Psoas muscle (tissue), 8 donors: ENCODE measurements at regions of chr18 and their contacts with region 1.

Region 1: DNA sequence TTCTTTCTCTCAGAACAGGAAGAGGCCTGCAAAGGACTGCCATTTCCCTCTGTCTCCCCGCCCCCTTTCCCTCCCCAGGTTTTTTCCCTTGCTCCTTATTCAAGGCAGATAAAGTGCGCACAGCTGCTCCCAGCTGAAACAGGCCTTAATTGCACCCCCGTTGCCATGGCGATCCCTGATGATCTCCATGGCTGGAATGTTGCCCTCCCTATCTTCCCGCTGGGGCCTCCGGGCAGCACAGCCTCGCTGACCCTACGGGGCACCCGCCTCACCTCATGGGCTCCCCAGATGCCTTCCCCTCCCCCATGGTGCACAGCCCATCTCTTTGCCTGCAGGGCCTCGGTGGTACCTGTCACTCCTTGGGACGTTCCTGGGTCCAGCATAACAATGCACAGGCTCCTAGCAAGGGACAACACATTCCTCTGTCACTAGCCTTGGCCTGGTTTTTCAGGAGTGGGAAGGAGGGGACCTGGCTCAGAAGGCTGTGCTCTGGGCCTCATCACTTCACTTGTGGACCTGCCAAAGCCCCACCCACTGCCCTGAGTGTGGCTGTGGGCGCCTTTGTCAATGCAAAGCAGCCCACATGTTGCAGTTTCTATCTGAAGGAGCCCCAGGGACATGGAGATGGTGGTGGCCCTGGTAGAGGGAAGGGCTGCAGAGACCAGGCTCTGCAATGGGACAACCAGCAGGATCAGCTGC is 115.0 kb downstream of the CELF4 start:
- DNase-seq: no peak
- ATAC-seq: no peak
- H3K4me3 ChIP-seq: no peak overlapping the region
- H3K27ac ChIP-seq: no peak overlapping the region
- H3K4me1 ChIP-seq: no peaks in the 10 kb centered on the region
- H3K27me3 ChIP-seq: peaks cover 0 to 7% (median 6%) of the 10 kb centered on the region in 3 donors
- CTCF ChIP-seq: no peak

Region 2: DNA sequence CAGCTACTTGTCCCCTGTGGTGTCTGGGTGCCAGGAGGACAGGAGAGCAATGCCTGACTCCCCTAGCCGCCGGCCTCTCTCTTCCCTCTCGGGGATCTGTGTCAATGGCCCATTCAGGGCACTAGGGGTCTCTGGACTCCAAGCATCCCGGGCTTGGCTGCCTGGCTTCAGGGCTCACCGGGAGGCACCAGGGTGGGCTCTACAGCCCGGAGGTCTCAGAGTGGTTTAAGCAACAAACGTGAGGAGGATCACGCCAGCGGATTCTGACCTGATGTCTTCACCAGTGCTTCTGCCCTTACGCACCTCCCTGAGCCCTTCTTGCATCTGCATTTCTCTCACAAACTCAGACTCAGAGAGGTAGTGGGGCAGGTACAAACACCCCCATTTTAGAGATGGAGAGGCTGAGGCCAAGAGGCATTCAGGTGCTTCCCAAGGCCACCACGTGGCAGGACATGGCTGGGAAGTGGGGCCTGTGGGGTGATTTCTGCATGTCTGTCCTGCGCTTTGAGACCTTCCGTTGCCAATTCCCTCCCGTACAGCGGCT is 128.0 kb before region 1 on chr18:
- intact Hi-C with region 1: no loop called
- DNase-seq: peak in 1 of 2 donors; percentile 26
- ATAC-seq: peak in 3 of 4 donors; percentile 51 to 55 (median 52)
- H3K4me3 ChIP-seq: no peak overlapping the region
- H3K27ac ChIP-seq: no peak overlapping the region
- H3K4me1 ChIP-seq: no peaks in the 10 kb centered on the region
- H3K27me3 ChIP-seq: peaks cover 0 to 13% (median 5%) of the 10 kb centered on the region in 3 donors
- CTCF ChIP-seq: peak; percentile 46

Region 3: DNA sequence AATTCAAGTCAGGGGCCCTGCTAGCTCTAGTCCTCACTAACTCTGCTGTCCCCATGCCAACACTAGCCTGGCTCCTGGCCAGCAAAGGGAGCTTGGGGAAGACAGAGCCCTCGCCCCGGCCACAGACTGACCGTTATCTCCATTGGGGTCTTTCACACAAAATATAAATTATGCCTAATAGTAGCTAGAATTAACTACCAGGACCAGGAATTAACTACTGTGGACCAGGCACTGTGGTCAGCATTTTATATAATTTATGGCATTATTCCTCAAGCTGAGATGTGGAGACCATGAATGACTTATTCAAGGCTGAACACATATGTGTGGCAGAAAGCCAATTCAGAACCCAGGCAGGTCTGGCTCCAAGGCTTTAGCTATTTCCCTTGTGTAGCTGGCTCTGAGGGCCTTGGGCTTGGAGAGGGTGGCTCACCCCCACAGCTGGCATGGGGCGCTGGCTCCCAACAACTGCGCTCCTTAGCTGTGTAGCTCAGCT is 65.8 kb after region 1 on chr18:
- intact Hi-C with region 1: loop called in 1 of 2 experiments (anchors 10 kb)
- DNase-seq: no peak
- ATAC-seq: no peak
- H3K4me3 ChIP-seq: no peak overlapping the region
- H3K27ac ChIP-seq: no peak overlapping the region
- H3K4me1 ChIP-seq: no peaks in the 10 kb centered on the region
- H3K27me3 ChIP-seq: peaks cover 0 to 9% (median 0%) of the 10 kb centered on the region in 3 donors
- CTCF ChIP-seq: no peak